GM10248 (cell line): ENCODE measurements at regions of chr7 and their contacts with region 1.

Region 1: DNA sequence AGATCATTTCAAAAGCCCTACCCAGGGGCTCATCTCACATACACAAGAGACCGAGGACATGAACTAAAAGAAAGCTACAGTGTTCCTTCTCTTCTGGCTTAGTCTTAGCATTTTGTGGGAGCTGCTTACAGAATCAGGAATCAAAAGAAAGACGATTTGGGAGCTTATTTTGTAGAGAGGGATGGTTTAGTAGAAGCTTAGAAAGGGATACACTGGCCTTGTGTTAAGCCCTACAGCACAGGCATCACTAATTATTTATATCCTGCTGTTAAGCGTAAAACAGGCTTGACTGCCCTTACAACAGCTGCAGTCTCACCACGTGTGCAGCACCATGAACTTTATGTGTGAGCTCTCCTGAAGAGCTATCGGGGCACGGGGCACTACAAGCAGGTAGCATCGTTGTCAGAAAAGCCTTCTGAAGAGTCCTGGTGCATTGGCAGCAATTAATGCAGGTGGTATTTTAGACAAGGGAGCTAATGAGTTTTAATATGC is 798.3 kb downstream of the NXPH1 start:
- DNase-seq: no peak
- CTCF ChIP-seq: no peak

Region 2: GRCh38 chr7:9242636-9243035 is 11.0 kb after region 1 on chr7:
- CTCF ChIA-PET with region 1: interaction called, 11 read pairs
- POLR2A ChIA-PET with region 1: no interaction called
- DNase-seq: no peak
- CTCF ChIP-seq: no peak

Region 3: DNA sequence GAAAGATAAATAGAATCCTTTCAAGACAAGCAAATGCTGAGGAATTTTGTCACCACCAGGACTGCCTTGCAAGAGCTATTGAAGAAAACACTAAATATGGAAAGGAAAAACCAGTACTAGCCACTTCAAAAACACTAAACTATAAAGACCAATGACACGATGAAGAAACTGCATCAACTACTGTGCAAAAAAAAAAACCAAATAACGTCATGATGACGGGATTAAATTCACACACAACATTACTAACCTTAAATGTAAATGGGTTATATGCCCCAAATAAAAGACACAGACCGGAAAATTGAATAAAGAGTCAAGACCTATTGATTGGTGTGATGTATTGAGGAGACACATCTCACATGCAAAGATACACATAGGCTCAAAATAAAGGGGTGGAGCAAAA is 21.1 kb after region 1 on chr7:
- CTCF ChIA-PET with region 1: no interaction called
- POLR2A ChIA-PET with region 1: no interaction called
- DNase-seq: no peak
- CTCF ChIP-seq: no peak